ENCODE measurements at regions of chr19 and their contacts with region 1.

Region 1: DNA sequence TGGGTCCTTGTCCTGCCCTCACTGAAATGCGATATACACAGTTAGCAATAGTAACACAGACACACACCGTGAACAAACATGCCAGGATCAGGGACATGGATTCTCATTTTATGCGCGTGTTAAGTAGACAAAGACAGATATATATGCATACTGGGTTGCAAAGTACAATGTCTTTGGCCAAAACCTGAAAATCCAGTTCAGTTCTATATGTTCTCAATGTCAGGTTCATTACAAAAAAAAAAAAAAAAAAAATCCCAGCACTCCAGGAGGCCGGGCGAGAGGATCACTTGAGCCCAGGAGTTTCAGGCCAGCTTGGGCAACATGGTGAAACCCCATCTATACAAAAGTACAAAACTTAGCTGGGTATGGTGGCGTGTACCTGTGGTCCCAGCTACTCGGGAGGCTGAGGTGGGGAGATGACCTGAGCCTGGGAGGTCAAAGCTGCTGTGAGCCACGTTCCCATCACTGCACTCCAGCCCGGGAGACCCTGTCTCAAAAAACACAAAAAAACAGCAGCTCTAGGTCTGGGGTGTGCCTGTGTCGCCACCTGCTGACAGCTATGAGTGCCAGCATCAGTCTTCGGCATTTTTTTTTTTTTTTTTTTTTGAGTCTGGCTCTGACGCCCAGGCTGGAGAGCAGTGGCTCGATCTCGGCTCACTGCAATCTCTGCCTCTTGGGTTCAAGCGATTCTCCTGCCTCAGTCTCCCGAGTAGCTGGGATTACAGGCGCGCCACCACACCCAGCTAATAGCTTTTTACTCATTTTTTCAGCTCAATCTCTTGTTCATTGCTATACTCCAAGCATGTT is 10.3 kb downstream of the AP2S1 start:
- DNase-seq: peak; percentile 65
- H3K4me3 Mint-ChIP-seq: no peak overlapping the region
- H3K27ac Mint-ChIP-seq: peak overlapping the region; percentile 38
- H3K4me1 Mint-ChIP-seq: peaks cover 2% of the 10 kb centered on the region
- H3K27me3 Mint-ChIP-seq: no peaks in the 10 kb centered on the region

Region 2: DNA sequence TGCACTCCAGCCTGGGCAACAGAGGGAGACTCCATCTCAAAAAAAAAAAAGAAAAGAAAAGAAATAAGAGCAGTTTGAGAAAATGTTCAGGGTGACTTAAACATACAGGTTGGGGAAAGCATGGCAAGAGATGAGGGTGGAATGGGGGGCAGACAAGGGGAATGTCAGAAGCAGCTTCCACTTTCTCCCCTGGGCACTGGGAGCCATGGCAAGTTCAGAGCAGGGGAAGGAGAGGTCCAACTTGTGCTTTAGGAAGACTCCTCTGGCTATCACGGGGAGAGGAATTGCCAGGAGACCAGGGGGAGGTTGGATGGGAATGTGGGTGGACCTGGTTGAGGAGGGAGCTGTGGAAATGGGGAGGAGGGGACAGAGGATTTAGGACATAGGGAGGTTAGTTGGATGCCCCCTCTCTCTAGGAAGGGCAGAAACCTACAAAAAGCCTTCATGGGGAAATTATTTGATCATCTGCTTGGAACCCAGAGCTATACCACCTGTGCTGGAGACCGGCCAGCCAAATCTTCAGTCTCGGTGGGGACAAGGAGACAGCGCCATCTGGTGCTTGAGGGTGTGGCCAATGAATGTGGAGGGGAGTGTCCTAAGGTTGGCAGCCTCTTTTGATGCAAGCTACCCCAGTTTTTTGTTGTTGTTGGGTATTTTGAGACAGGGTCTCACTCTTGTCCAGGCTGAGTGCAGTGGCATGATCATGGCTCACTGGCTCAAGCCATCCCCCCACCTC is 86.8 kb before region 1 on chr19:
- CTCF ChIA-PET with region 1: interaction called, 78 read pairs
- POLR2A ChIA-PET with region 1: no interaction called
- intact Hi-C with region 1: loop called (anchors 1 kb)
- DNase-seq: peak; percentile 83
- H3K4me3 Mint-ChIP-seq: no peak overlapping the region
- H3K27ac Mint-ChIP-seq: no peak overlapping the region
- H3K4me1 Mint-ChIP-seq: peaks cover under 1% of the 10 kb centered on the region
- H3K27me3 Mint-ChIP-seq: no peaks in the 10 kb centered on the region

Region 3: GRCh38 chr19:46766569-46767317 is 73.6 kb before region 1 on chr19:
- CTCF ChIA-PET with region 1: interaction called, 32 read pairs
- POLR2A ChIA-PET with region 1: no interaction called
- intact Hi-C with region 1: no loop called
- DNase-seq: peak; percentile 76
- H3K4me3 Mint-ChIP-seq: no peak overlapping the region
- H3K27ac Mint-ChIP-seq: no peak overlapping the region
- H3K4me1 Mint-ChIP-seq: peaks cover 2% of the 10 kb centered on the region
- H3K27me3 Mint-ChIP-seq: no peaks in the 10 kb centered on the region

Region 4: DNA sequence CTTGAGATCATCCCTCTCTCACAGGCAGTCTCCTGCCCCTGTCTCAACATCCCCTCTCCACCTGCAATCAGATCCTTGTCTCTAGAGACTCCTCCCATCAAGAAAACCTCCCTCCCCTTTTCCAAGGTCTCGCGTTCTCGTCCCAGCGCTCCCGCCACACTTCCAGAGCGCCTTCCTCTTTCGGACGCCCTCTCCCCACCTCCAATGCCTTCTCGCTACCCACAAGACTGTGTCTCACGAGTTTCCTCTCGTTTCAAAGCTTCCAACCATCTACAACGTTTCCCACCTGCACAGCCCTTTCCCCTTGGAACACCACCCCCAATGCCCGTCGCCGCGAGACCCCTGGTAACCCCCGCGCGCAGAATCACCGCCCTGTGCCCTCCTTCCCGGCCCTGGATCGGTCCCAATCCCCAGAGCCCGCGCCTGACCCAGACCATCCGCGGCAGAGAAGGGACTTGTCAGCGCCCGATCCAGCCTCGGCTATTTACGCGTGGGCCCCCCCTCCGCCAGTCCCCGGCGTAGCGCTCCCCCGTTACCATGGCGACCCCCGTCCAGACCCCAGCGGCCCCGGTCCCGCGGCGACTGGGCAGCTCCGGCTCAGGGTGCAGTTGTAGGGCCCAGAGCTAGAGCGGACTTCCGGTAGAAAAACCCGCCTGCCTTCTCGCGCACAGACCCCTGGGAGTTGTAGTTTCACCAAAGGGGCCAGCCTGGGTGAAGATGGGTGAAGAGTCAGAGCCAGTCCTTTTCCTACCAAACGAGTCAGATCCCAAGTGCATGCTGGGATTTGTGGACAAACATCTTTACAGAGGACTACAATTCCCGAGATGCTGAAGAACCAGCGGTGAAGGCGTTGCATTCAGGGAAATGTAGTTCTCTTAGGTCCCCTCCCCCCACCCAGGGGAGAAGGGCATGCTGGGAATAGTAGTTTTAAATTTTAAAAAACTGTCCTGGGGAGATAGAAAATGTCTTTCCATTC is 10.2 kb after region 1 on chr19 and contains the start of gene AP2S1:
- CTCF ChIA-PET with region 1: interaction called, 22 read pairs
- POLR2A ChIA-PET with region 1: no interaction called
- intact Hi-C with region 1: no loop called
- DNase-seq: peak; percentile 96
- H3K4me3 Mint-ChIP-seq: peak within 1 kb of the TSS; percentile 95
- H3K27ac Mint-ChIP-seq: peak within 1 kb of the TSS; percentile 80
- H3K4me1 Mint-ChIP-seq: peaks cover 19% of the 10 kb centered on the region
- H3K27me3 Mint-ChIP-seq: no peaks in the 10 kb centered on the region
- total RNA-seq, gene AP2S1: 108 to 117 TPM

Region 5: DNA sequence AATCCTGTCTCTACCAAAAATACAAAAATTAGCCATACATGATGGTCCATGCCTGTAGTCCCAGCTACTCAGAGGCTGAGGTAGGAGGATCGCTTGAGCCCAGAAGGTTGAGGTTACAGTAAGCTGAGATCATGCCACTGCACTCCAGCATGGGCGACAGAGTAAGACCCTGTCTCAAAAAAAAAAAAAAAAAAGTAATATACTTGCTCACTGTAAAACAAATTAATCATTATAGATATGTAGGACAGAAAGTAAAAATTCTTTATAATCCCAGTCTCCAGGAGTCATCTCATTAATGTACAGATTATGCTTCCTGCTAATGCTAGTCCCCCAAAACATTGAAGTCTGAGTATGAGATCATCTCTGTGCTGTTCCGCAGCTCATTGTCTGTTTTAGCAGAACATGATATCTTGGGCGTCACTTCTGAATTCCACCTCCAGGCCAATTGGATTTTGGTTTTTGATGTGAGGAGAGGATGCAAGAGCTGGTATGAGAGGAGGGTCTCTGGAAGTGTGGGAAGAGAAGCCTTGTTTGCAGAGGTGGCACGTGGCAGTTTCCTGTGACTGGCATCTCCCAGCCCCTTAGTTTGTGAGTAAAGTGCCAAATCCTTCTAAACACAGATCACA is 103.9 kb after region 1 on chr19:
- CTCF ChIA-PET with region 1: no interaction called
- POLR2A ChIA-PET with region 1: no interaction called
- intact Hi-C with region 1: no loop called
- DNase-seq: no peak
- H3K4me3 Mint-ChIP-seq: no peak overlapping the region
- H3K27ac Mint-ChIP-seq: no peak overlapping the region
- H3K4me1 Mint-ChIP-seq: peaks cover 28% of the 10 kb centered on the region
- H3K27me3 Mint-ChIP-seq: no peaks in the 10 kb centered on the region

Region 6: GRCh38 chr19:47130591-47131227 is 290.4 kb after region 1 on chr19 and contains the start of gene SAE1:
- CTCF ChIA-PET with region 1: no interaction called
- POLR2A ChIA-PET with region 1: no interaction called
- intact Hi-C with region 1: no loop called
- DNase-seq: peak; percentile 97
- H3K4me3 Mint-ChIP-seq: peak within 1 kb of the TSS; percentile 99
- H3K27ac Mint-ChIP-seq: peak within 1 kb of the TSS; percentile 94
- H3K4me1 Mint-ChIP-seq: peaks cover 47% of the 10 kb centered on the region
- H3K27me3 Mint-ChIP-seq: peaks cover 4% of the 10 kb centered on the region
- total RNA-seq, gene SAE1: 154 to 157 TPM